ENCODE measurements at regions of chr21 and their contacts with region 1.

Region 1: GRCh38 chr21:36330904-36331303 is 10.9 kb downstream of the MORC3 start:
- DNase-seq: peak; percentile 75
- ATAC-seq: peak; percentile 92
- H3K4me3 ChIP-seq: no peak overlapping the region
- H3K4me3 Mint-ChIP-seq: peak overlapping the region; percentile 37
- H3K27ac ChIP-seq: peak overlapping the region in 1 of 2 donors; percentile 73
- H3K27ac Mint-ChIP-seq: peak overlapping the region; percentile 65
- H3K4me1 ChIP-seq: peaks cover 32 to 40% of the 10 kb centered on the region in 2 donors
- H3K4me1 Mint-ChIP-seq: peaks cover 41% of the 10 kb centered on the region
- H3K27me3 ChIP-seq: no peaks in the 10 kb centered on the region
- H3K27me3 Mint-ChIP-seq: no peaks in the 10 kb centered on the region
- CTCF ChIP-seq: peak; percentile 84

Region 2: GRCh38 chr21:36149788-36150711 is 180.9 kb before region 1 on chr21:
- CTCF ChIA-PET with region 1: interaction called, 26 read pairs
- POLR2A ChIA-PET with region 1: interaction called, 3 read pairs
- intact Hi-C with region 1: loop called (anchors 1 kb)
- DNase-seq: peak; percentile 71
- ATAC-seq: peak; percentile 77
- H3K4me3 ChIP-seq: peak overlapping the region in 1 of 5 experiments; percentile 6
- H3K4me3 Mint-ChIP-seq: peak overlapping the region; percentile 66
- H3K27ac ChIP-seq: peak overlapping the region; percentile 47 to 50
- H3K27ac Mint-ChIP-seq: peak overlapping the region; percentile 92
- H3K4me1 ChIP-seq: peaks cover 27 to 32% of the 10 kb centered on the region in 2 donors
- H3K4me1 Mint-ChIP-seq: peaks cover 32% of the 10 kb centered on the region
- H3K27me3 ChIP-seq: no peaks in the 10 kb centered on the region
- H3K27me3 Mint-ChIP-seq: no peaks in the 10 kb centered on the region
- CTCF ChIP-seq: no peak

Region 3: GRCh38 chr21:36260030-36260787 is 70.7 kb before region 1 on chr21:
- CTCF ChIA-PET with region 1: interaction called, 27 read pairs
- POLR2A ChIA-PET with region 1: interaction called, 3 read pairs
- intact Hi-C with region 1: loop called (anchors 2 kb)
- DNase-seq: peak; percentile 78
- ATAC-seq: peak; percentile 44
- H3K4me3 ChIP-seq: peak overlapping the region; percentile 21 to 71 (median 34)
- H3K4me3 Mint-ChIP-seq: peak overlapping the region; percentile 86
- H3K27ac ChIP-seq: peak overlapping the region; percentile 68 to 77
- H3K27ac Mint-ChIP-seq: peak overlapping the region; percentile 94
- H3K4me1 ChIP-seq: peaks cover 81 to 90% of the 10 kb centered on the region in 2 donors
- H3K4me1 Mint-ChIP-seq: peaks cover 73% of the 10 kb centered on the region
- H3K27me3 ChIP-seq: no peaks in the 10 kb centered on the region
- H3K27me3 Mint-ChIP-seq: no peaks in the 10 kb centered on the region
- CTCF ChIP-seq: peak; percentile 82

Region 4: DNA sequence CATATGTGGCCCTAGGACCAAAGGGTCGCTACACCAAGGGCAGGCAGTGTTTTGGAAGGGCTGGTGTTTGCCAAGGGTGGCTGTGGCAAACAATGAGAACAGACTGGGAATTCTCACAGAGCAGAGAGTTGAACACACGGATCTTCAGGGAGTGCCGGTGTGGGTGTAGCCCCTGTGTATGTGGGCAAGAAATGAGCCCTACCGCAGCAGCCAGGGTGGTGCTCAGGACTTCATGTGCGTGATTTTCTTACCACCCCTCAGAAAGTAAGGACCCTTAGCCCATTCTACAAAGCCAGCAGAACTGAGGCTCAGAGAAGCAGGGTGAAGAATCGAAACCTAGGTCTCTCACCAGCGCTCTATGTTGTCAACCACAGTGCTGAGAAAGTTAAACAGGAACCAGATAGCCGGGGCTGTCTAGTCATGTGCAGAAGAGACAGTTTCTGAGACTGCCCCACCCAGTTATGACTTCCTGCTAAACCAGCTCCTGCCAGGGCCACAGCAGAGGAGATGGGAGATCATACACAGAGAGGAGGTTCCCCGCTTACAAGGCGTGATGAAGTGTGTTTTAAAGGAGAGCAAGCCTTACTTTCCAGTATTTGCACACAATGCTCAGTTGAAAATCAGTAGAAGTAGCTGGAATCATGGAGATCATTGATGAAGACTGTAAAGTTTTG is 32.8 kb before region 1 on chr21:
- CTCF ChIA-PET with region 1: interaction called, 9 read pairs
- POLR2A ChIA-PET with region 1: no interaction called
- intact Hi-C with region 1: loop called (anchors 1 kb)
- DNase-seq: peak; percentile 92
- ATAC-seq: peak; percentile 88
- H3K4me3 ChIP-seq: peak overlapping the region in 4 of 5 experiments; percentile 5 to 53 (median 29)
- H3K4me3 Mint-ChIP-seq: peak overlapping the region; percentile 80
- H3K27ac ChIP-seq: peak overlapping the region; percentile 94 to 97
- H3K27ac Mint-ChIP-seq: peak overlapping the region; percentile 97
- H3K4me1 ChIP-seq: peaks cover 52 to 71% of the 10 kb centered on the region in 2 donors
- H3K4me1 Mint-ChIP-seq: peaks cover 53% of the 10 kb centered on the region
- H3K27me3 ChIP-seq: no peaks in the 10 kb centered on the region
- H3K27me3 Mint-ChIP-seq: no peaks in the 10 kb centered on the region
- CTCF ChIP-seq: no peak